ENCODE measurements at regions of chr2 and their contacts with region 1.

Region 1: GRCh38 chr2:60881047-60881932 is at the start of gene REL:
- DNase-seq: peak; percentile 97
- ATAC-seq: peak; percentile 76
- H3K4me3 ChIP-seq: peak within 1 kb of the TSS; percentile 84 to 100 (median 100)
- H3K4me3 Mint-ChIP-seq: peak within 1 kb of the TSS; percentile 100
- H3K27ac ChIP-seq: peak within 1 kb of the TSS; percentile 100
- H3K27ac Mint-ChIP-seq: peak within 1 kb of the TSS; percentile 98
- H3K4me1 ChIP-seq: peaks cover 22 to 28% of the 10 kb centered on the region in 2 donors
- H3K4me1 Mint-ChIP-seq: peaks cover 36% of the 10 kb centered on the region
- H3K27me3 ChIP-seq: no peaks in the 10 kb centered on the region
- H3K27me3 Mint-ChIP-seq: no peaks in the 10 kb centered on the region
- CTCF ChIP-seq: no peak
- total RNA-seq, gene REL: 283 and 297 TPM in 2 replicates

Region 2: DNA sequence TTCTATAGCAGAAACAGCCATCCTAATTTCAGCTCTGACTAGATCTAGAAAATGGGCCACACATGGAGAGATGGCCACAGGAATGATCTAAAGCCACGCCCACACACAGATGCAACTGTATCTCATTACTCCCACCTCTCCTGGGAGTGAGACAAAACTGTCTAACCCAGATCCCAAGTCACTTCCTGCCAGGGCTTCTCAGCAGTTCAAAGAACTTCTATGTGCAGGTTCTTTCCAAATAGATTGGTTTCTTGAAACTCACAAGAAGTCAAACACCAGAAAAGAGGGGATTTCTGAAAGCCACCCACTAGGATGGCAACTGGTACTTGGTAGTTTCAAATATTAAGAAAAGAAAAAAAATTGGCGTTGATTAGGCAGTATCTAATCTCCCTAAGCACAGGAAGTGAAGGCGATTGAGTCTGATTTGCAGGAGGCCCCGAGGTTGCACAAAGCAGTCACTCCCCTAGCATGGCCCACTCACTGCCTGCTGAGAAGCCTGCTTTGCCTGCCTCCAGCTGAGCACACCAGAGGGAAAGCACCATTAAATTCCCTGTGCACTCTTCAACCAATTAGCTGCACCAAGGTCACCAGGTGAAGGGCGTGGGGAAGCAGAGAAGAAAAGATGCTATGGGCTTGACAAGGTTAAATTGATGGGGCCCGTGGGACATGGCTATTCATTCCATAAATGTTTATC is 74.2 kb before region 1 on chr2:
- CTCF ChIA-PET with region 1: interaction called, 48 read pairs
- POLR2A ChIA-PET with region 1: interaction called, 9 read pairs
- intact Hi-C with region 1: loop called (anchors 1 kb)
- DNase-seq: peak; percentile 32
- ATAC-seq: peak; percentile 56
- H3K4me3 ChIP-seq: no peak overlapping the region
- H3K4me3 Mint-ChIP-seq: no peak overlapping the region
- H3K27ac ChIP-seq: peak overlapping the region; percentile 31 to 55
- H3K27ac Mint-ChIP-seq: peak overlapping the region; percentile 83
- H3K4me1 ChIP-seq: peaks cover 20 to 32% of the 10 kb centered on the region in 2 donors
- H3K4me1 Mint-ChIP-seq: peaks cover 34% of the 10 kb centered on the region
- H3K27me3 ChIP-seq: no peaks in the 10 kb centered on the region
- H3K27me3 Mint-ChIP-seq: no peaks in the 10 kb centered on the region
- CTCF ChIP-seq: no peak

Region 3: DNA sequence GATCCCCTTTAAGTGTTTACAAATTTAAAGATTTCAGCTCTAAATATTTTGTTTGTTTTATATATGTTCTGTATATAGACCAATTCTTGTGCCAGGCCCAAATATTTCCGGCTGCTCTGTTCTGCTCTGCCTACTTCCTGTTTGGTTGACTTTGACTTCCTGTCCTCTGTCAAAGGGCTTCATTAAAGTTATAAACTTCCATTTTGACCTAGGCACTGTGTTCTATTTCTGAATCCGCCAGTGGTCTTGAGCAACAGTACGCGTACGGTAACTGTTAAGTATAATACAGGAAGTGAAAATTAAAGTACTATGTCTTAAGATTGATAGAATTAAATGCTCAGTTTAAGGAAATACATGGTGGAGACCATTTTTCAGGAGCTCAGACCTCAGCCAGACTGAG is 13.4 kb before region 1 on chr2:
- CTCF ChIA-PET with region 1: interaction called, 14 read pairs
- POLR2A ChIA-PET with region 1: interaction called, 9 read pairs
- intact Hi-C with region 1: loop called (anchors 1 kb)
- DNase-seq: peak; percentile 86
- ATAC-seq: peak; percentile 88
- H3K4me3 ChIP-seq: peak overlapping the region in 1 of 5 experiments; percentile 33
- H3K4me3 Mint-ChIP-seq: peak overlapping the region; percentile 38
- H3K27ac ChIP-seq: peak overlapping the region; percentile 48 to 64
- H3K27ac Mint-ChIP-seq: peak overlapping the region; percentile 88
- H3K4me1 ChIP-seq: peaks cover 49 to 57% of the 10 kb centered on the region in 2 donors
- H3K4me1 Mint-ChIP-seq: peaks cover 51% of the 10 kb centered on the region
- H3K27me3 ChIP-seq: no peaks in the 10 kb centered on the region
- H3K27me3 Mint-ChIP-seq: no peaks in the 10 kb centered on the region
- CTCF ChIP-seq: no peak

Region 4: DNA sequence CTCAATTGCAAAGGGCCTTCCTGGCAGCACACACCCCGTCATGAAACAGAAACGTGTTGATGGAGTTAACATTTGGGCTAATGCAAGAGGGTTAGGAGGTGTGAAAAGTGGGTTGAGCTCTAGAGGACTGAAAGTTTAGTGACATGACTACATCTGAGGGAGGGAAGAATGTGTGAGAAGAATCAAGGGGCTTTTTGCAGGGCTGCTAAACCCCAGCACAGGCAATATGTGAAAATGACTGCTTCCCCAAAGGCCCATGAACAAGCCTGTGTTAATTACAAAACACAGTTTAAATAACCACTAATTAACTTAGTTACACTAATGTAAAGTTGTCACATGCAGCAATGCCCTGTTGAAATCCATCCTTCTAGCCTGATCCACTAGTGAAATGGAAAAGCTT is 72.8 kb after region 1 on chr2:
- CTCF ChIA-PET with region 1: no interaction called
- POLR2A ChIA-PET with region 1: no interaction called
- intact Hi-C with region 1: no loop called
- DNase-seq: no peak
- ATAC-seq: no peak
- H3K4me3 ChIP-seq: no peak overlapping the region
- H3K4me3 Mint-ChIP-seq: no peak overlapping the region
- H3K27ac ChIP-seq: no peak overlapping the region
- H3K27ac Mint-ChIP-seq: peak overlapping the region; percentile 61
- H3K4me1 ChIP-seq: no peaks in the 10 kb centered on the region
- H3K4me1 Mint-ChIP-seq: peaks cover 2% of the 10 kb centered on the region
- H3K27me3 ChIP-seq: no peaks in the 10 kb centered on the region
- H3K27me3 Mint-ChIP-seq: no peaks in the 10 kb centered on the region
- CTCF ChIP-seq: no peak

Region 5: GRCh38 chr2:60966507-60967405 is 85.5 kb after region 1 on chr2:
- CTCF ChIA-PET with region 1: interaction called, 4 read pairs
- POLR2A ChIA-PET with region 1: interaction called, 4 read pairs
- intact Hi-C with region 1: loop called (anchors 2 kb)
- DNase-seq: peak; percentile 65
- ATAC-seq: peak; percentile 54
- H3K4me3 ChIP-seq: peak overlapping the region in 4 of 5 experiments; percentile 13 to 52 (median 40)
- H3K4me3 Mint-ChIP-seq: peak overlapping the region; percentile 85
- H3K27ac ChIP-seq: peak overlapping the region; percentile 82 to 85
- H3K27ac Mint-ChIP-seq: peak overlapping the region; percentile 92
- H3K4me1 ChIP-seq: peaks cover 59 to 66% of the 10 kb centered on the region in 2 donors
- H3K4me1 Mint-ChIP-seq: peaks cover 73% of the 10 kb centered on the region
- H3K27me3 ChIP-seq: no peaks in the 10 kb centered on the region
- H3K27me3 Mint-ChIP-seq: no peaks in the 10 kb centered on the region
- CTCF ChIP-seq: no peak

Region 6: GRCh38 chr2:61176755-61177726 is 295.8 kb after region 1 on chr2:
- CTCF ChIA-PET with region 1: no interaction called
- POLR2A ChIA-PET with region 1: interaction called, 3 read pairs
- intact Hi-C with region 1: loop called (anchors 1 kb)
- DNase-seq: peak; percentile 94
- ATAC-seq: peak; percentile 89
- H3K4me3 ChIP-seq: peak overlapping the region; percentile 69 to 97 (median 90)
- H3K4me3 Mint-ChIP-seq: peak overlapping the region; percentile 97
- H3K27ac ChIP-seq: peak overlapping the region; percentile 91 to 96
- H3K27ac Mint-ChIP-seq: peak overlapping the region; percentile 90
- H3K4me1 ChIP-seq: peaks cover 26 to 42% of the 10 kb centered on the region in 2 donors
- H3K4me1 Mint-ChIP-seq: peaks cover 48% of the 10 kb centered on the region
- H3K27me3 ChIP-seq: no peaks in the 10 kb centered on the region
- H3K27me3 Mint-ChIP-seq: no peaks in the 10 kb centered on the region
- CTCF ChIP-seq: no peak

Region 7: DNA sequence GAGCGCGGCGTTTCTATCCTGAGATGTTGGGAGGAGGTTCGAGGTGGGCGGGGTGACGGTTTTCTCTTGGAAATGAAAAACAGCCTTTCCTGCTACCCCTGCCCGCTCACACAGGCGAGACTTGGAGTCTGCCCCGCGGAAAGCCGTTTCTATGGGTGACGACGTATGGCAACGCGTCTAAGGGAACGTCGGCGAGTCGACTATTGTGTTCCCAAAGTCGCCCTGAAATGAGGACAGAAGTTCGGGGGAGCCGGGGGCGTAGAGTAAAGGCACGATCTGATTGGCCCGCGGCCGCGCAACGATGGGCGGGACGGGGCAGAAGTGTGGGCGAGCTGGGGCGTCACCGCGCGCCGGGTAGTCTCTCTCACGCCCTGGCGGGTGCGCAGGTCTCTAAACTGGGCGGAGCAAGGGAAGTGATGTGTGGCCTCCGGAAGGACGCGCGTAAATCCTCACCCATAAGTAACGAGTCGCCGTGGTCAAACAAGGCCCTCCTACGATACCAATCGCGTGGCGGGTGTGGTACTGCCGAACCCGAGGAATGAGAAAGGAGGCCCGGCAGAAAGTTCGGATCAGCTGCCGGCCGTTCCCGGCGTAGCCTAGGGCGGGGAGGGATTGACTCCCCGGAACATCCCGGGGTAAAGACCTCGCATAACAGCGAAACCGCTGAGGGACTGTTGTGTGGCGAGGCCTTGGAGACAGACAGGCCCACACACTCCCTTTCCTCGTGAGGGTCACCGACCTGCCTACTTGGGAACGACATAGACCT is 882.9 kb after region 1 on chr2:
- CTCF ChIA-PET with region 1: no interaction called
- POLR2A ChIA-PET with region 1: no interaction called
- intact Hi-C with region 1: loop called (anchors 5 kb)
- DNase-seq: peak; percentile 98
- ATAC-seq: peak; percentile 98
- H3K4me3 ChIP-seq: peak overlapping the region; percentile 89 to 94 (median 92)
- H3K4me3 Mint-ChIP-seq: peak overlapping the region; percentile 90
- H3K27ac ChIP-seq: peak overlapping the region; percentile 96 to 98
- H3K27ac Mint-ChIP-seq: peak overlapping the region; percentile 96
- H3K4me1 ChIP-seq: peaks cover 4 to 10% of the 10 kb centered on the region in 2 donors
- H3K4me1 Mint-ChIP-seq: peaks cover 14% of the 10 kb centered on the region
- H3K27me3 ChIP-seq: no peaks in the 10 kb centered on the region
- H3K27me3 Mint-ChIP-seq: peaks cover 2% of the 10 kb centered on the region
- CTCF ChIP-seq: no peak

Measured in B cell (primary cell).